ENCODE measurements at regions of chr20 and their contacts with region 1.

Region 1: GRCh38 chr20:14189794-14190402 is 147.5 kb downstream of the FLRT3 start:
- DNase-seq: no peak

Region 2: GRCh38 chr20:16020971-16021370 is 1831.1 kb after region 1 on chr20:
- intact Hi-C with region 1: loop called in 1 of 2 experiments (anchors 10 kb)
- DNase-seq: no peak